ENCODE measurements at regions of chr2 and their contacts with region 1.

Region 1: DNA sequence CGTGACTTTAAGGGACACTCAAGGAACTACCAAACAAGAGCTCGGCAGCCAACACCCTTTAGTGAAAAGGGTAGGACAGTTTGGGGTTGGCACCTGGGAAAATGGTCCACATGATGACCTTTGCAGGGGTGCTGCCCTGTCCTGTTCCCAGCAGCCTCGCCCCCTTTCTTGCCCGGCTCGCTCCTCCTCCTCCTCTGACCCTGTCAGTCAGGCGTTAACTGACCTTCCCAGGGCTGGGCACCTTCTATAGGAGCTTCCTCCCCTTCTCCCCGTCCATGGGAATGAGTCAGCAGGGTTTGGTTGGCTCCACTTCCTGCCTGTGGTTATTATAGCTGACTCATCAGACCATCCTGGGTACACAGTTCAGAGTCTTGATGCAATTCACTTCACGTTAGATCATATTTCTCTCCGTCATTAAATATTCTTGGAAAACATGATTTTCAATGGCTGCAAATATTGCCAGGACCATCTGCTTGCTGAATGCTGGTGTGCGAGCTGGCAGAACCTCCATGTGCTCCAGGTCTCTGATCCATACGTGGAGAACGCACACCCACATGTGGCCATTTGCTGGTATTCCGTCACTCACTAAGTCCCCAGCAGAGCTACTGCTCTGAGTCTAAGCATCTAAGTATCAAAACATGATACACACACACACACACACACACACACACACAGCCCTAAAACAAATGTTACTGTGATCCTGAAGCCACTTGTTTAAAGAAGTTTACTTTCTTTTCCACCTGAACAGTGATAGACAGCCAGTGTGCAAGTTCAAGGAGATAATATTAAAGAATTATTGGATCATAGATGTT is 185.0 kb downstream of the ANAPC1 start:
- DNase-seq: peak in 1 of 2 experiments; percentile 14
- H3K4me3 ChIP-seq: no peak overlapping the region
- H3K4me1 ChIP-seq: no peaks in the 10 kb centered on the region
- H3K27me3 ChIP-seq: no peaks in the 10 kb centered on the region

Region 2: DNA sequence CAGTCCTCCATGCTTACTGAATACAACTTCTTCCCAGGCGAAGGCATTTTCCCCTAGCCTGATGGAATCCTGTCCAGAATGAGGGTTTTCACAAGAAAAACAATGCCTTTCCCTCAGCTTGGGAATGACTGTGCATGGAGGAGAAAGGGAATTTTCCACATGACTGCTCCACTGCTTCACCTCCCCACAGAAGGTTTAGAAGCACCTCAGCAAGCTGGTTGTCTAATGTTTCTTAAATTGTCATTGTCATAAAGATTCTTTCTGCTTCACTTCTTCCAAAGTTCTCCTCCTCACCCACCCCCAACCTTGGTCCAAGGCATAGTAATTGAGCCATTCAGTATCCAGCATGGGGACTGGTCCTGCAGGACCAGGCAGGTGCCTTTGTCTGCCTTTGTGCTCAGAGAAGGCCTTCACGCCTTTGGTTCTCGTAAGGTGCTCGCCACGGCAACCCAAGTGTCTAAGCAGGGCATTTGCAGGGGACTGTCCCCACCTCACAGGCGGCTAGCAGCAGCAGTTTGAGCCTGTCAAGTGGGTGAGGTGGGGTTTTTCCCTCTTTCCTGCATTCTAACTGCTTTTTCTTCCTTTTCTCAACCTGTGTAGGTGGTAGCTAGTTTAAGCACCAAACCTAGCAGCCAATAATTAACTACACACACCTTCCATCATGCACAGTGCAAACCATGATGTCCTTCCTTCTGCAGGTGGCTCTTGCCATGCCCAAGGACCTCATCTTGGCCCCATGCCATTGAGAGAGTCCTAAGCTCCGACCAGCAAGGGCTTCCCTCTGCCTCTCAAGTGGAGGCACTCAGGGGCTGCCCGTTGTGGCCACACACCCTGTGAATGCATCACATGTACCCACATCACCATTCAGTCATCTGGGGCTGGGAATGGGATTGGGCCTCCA is 643.9 kb before region 1 on chr2:
- in situ Hi-C with region 1: no loop called
- DNase-seq: no peak
- H3K4me3 ChIP-seq: no peak overlapping the region
- H3K4me1 ChIP-seq: no peaks in the 10 kb centered on the region
- H3K27me3 ChIP-seq: no peaks in the 10 kb centered on the region

Region 3: DNA sequence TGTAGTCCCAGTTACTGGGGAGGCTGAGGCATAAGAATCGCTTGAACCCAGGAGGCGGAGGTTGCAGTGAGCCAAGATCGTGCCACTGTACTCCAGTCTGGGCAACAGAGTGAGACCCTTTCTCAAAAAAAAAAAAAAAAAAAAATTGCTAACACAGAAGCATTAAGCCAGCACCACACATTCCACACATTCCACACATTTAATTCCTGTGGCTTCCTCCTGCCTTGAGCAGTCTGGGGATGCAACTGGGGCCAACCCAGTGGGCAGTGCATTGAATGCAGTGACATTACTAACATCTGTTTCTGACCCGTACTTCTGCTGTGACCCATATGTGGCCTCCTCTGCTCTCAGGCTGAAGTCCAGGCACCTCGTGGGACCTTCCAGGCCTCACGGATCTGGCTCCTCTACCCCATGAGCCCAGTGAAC is 471.2 kb before region 1 on chr2:
- in situ Hi-C with region 1: loop called (anchors 25 kb)
- DNase-seq: peak in 1 of 2 experiments; percentile 17
- H3K4me3 ChIP-seq: no peak overlapping the region
- H3K4me1 ChIP-seq: no peaks in the 10 kb centered on the region
- H3K27me3 ChIP-seq: no peaks in the 10 kb centered on the region